Endothelial cell of umbilical vein (primary cell): ENCODE measurements at regions of chr9 and their contacts with region 1.

Region 1: DNA sequence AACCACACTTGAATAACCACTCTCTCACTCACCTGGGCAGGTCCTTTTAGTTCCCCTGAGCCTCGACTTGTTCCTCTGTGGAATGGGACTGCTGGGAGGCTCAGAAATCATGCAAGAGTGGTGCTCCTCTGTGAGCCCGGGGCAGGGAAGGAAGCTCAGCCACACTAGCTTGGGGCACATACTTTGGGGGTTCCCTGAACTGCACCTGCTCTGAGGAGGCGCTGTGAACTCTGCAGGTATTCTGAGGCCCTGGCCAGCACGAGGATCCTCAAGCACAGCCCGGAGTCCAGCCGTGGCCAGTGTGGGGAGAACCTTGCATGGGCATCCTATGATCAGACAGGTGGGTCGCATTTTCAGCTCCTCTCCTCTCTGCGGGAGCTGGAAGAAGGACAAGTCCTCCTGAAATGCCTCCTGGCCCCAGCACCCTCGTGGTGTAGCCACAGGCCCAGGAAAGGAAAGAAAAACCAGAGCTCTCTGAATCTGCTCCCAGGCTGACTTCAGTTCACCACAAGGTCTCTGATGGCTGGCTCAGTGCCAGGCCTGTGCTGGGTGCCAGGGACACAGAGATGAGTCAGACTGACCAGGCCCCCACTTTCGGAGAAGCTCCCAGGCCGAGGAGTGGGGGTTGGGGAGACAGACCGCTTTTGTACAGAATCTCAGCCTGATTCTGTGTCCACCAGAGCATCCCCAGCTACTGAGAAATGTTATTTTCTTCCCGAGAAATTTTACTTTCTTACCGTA is 11.9 kb downstream of the GLIPR2 start:
- DNase-seq: peak; percentile 86
- H3K4me3 ChIP-seq: no peak overlapping the region
- H3K27ac ChIP-seq: peak overlapping the region; percentile 69
- H3K4me1 ChIP-seq: peaks cover 35% of the 10 kb centered on the region
- H3K27me3 ChIP-seq: no peaks in the 10 kb centered on the region
- CTCF ChIP-seq: no peak
- POLR2A ChIP-seq: no peak

Region 2: DNA sequence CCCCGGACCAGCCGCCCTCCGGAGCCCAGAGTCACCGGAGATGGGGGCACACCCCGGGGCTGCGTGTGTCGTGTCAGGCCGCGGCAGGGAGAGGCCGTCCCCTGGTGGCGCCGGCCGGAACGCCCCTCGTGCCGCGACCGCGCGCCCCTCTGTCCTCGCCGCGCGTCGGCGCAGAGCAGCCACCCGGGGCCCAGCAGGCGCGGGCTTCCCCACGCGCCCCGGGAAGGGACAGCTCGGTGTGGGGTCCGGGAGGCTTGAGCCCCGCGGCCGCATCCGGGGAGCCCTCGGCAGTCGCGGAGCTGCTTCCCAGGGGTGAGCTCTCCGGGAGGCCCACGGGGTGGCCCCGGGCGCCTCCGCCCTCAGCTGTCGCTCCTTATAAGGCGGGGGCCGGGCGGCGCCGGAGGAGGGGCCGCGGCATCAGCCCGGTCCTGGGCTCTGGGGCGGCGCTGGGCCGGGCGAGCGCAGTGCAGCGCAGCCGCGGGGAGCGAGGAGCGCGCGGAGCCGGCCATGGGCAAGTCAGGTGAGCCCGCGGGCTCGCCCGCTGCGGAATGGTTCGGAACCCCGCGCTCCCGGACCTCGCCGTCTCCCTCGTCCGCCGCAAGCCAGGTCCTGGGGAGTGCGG is 12.1 kb before region 1 on chr9 and contains the start of gene GLIPR2:
- CTCF ChIA-PET with region 1: interaction called, 11 read pairs
- POLR2A ChIA-PET with region 1: no interaction called
- dilution Hi-C with region 1: no loop called
- intact Hi-C with region 1: loop called (anchors 2 kb)
- DNase-seq: peak; percentile 55
- H3K4me3 ChIP-seq: peak within 1 kb of the TSS; percentile 40 to 62 (median 61)
- H3K27ac ChIP-seq: peak within 1 kb of the TSS; percentile 16
- H3K4me1 ChIP-seq: peaks cover 11% of the 10 kb centered on the region
- H3K27me3 ChIP-seq: no peaks in the 10 kb centered on the region
- CTCF ChIP-seq: peak; percentile 12 to 23
- POLR2A ChIP-seq: no peak
- total RNA-seq, gene GLIPR2: 20.0 and 22.0 TPM in 2 replicates